ENCODE measurements at regions of chr1 and their contacts with region 1.

Region 1: GRCh38 chr1:41573785-41574713 is 89.6 kb upstream of the EDN2 start:
- DNase-seq: peak; percentile 70 to 95 (median 88)

Region 2: GRCh38 chr1:41662061-41662764 is 88.2 kb after region 1 on chr1:
- intact Hi-C with region 1: loop called (anchors 5 kb)
- DNase-seq: peak in 40 of 42 donors; percentile 33 to 84 (median 65)

Measured in head of caudate nucleus (tissue), 42 donors.